Esophagus squamous epithelium (tissue), 5 donors: ENCODE measurements at regions of chr2 and their contacts with region 1.

Region 1: GRCh38 chr2:68282811-68283418 is 30.6 kb upstream of the PPP3R1 start:
- DNase-seq: no peak
- H3K4me3 ChIP-seq: no peak overlapping the region
- H3K27ac ChIP-seq: no peak overlapping the region
- H3K4me1 ChIP-seq: peaks cover 15 to 80% (median 16%) of the 10 kb centered on the region in 3 donors
- H3K27me3 ChIP-seq: no peaks in the 10 kb centered on the region
- CTCF ChIP-seq: peak; percentile 61 to 82 (median 72)
- POLR2A ChIP-seq: no peak

Region 2: GRCh38 chr2:68127358-68128242 is 155.3 kb before region 1 on chr2:
- intact Hi-C with region 1: loop called (anchors 5 kb)
- DNase-seq: no peak
- H3K4me3 ChIP-seq: no peak overlapping the region
- H3K27ac ChIP-seq: no peak overlapping the region
- H3K4me1 ChIP-seq: peaks cover 0 to 2% (median 0%) of the 10 kb centered on the region in 3 donors
- H3K27me3 ChIP-seq: no peaks in the 10 kb centered on the region
- CTCF ChIP-seq: no peak
- POLR2A ChIP-seq: no peak

Region 3: GRCh38 chr2:68182902-68183301 is 100.0 kb before region 1 on chr2:
- intact Hi-C with region 1: no loop called
- DNase-seq: no peak
- H3K4me3 ChIP-seq: no peak overlapping the region
- H3K27ac ChIP-seq: no peak overlapping the region
- H3K4me1 ChIP-seq: peaks cover 0 to 8% (median 0%) of the 10 kb centered on the region in 3 donors
- H3K27me3 ChIP-seq: no peaks in the 10 kb centered on the region
- CTCF ChIP-seq: no peak
- POLR2A ChIP-seq: no peak

Region 4: DNA sequence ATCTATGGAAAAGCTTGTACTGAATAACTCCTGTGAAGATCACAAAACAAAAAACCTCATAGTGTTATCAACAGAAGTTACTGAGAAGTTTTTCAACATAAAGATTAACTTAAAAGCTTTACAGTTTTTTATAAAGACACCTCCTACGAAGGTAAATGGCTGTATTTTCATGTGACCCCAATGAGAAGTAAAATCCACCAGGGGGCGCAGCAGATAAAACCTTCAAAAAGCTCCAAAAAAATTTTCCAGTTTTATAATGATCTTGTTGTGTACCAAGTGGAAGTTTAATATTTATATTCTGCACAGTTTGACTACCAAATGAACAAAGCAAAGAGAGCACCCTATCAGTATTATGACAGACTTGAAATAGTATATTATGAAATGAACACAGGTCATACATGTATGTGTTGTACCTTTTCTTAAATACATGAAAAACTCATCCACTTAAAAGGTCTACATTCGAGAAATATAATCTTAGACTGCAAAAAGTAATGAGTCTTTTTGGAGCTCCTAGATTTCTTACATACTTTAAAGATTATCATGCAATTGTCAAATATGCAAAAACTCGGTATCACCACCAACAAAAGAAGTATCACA is 86.7 kb before region 1 on chr2:
- intact Hi-C with region 1: loop called (anchors 10 kb)
- DNase-seq: no peak
- H3K4me3 ChIP-seq: no peak overlapping the region
- H3K27ac ChIP-seq: no peak overlapping the region
- H3K4me1 ChIP-seq: peaks cover 0 to 58% (median 20%) of the 10 kb centered on the region in 3 donors
- H3K27me3 ChIP-seq: no peaks in the 10 kb centered on the region
- CTCF ChIP-seq: peak in 5 of 6 experiments; percentile 43 to 80 (median 60)
- POLR2A ChIP-seq: no peak